Dendritic cell treated with granulocyte-macrophage colony-stimulating factor and Interleukin-4, amounts not matched to agents 40 ng/mL and 50 ng/mL, for 4 days (primary cell): ENCODE measurements at regions of chr5 and their contacts with region 1.

Region 1: DNA sequence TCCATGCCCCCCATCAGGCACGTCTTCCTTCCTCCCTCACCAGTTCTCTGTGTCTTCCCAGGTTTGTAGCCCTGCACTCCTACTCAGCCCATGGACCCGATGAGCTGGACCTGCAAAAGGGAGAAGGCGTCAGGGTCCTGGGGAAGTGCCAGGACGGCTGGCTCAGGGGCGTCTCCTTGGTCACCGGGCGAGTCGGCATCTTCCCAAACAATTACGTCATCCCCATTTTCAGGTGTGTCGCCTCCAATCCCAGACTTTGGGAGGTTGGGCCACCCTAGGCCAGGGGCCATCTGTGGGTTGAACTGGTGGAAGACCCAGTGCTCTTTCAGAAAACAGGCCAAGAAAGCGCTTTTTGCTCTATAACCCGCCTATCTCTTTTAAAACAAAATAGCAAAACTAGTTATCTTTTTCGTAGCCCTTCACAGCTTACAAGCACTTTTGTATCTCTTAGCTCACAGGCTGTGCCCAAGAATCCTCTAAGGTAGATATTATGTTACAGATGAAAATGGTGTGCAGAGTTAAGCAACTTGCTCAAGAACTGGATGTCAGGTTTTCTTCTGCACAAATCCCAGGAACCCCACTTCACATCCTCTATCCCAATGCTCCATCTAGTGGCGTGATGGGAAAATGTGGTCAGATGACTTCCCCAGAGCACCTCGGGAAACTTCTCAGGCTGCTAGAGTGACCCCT is 56.2 kb downstream of the PLAC8L1 start:
- H3K4me3 Mint-ChIP-seq: no peak overlapping the region
- H3K27ac Mint-ChIP-seq: peak overlapping the region; percentile 0
- H3K4me1 Mint-ChIP-seq: no peaks in the 10 kb centered on the region
- H3K27me3 Mint-ChIP-seq: no peaks in the 10 kb centered on the region

Region 2: DNA sequence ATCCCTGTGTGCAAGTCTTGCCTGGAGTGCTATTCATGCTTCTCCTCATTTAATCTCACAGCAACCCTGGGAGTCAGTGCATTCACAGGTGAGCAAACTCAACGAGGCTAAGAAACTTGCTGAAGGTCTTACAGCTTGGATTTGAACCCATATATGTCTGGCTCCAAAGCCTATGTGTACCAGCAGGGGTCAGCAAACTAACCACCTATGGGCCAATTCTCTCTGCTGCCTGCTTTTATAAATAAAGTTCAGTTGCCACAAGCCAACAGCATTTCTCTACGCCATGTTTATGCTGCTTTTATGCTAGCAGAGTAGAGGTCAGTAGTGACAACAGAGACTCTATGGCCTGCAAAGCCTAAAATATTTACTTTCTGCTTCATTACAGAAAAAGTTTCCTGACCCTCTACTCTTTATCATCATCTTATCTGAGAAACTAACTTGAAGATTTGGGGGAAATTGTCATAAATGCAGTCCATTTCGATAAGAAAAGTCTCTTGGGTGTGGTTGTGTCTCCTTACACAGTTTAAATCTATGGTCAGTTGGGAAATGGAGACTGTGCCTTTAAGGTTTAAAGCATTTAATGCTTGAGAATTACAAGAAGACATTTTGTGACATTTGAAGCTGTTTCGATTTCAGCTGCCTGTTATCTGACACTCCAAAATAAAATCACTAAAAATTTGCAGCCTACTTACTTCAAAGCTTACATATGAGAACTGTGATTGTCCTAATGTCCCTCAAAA is 351.7 kb before region 1 on chr5:
- intact Hi-C with region 1: loop called (anchors 5 kb)
- H3K4me3 Mint-ChIP-seq: no peak overlapping the region
- H3K27ac Mint-ChIP-seq: no peak overlapping the region
- H3K4me1 Mint-ChIP-seq: peaks cover 18% of the 10 kb centered on the region
- H3K27me3 Mint-ChIP-seq: no peaks in the 10 kb centered on the region

Region 3: GRCh38 chr5:145825751-145826180 is 223.4 kb before region 1 on chr5:
- intact Hi-C with region 1: loop called (anchors 5 kb)
- H3K4me3 Mint-ChIP-seq: no peak overlapping the region
- H3K27ac Mint-ChIP-seq: no peak overlapping the region
- H3K4me1 Mint-ChIP-seq: no peaks in the 10 kb centered on the region
- H3K27me3 Mint-ChIP-seq: no peaks in the 10 kb centered on the region